Activated CD4-positive, alpha-beta T cell treated with anti-CD3 and anti-CD28 coated beads for 36 hours (primary cell): ENCODE measurements at regions of chr19 and their contacts with region 1.

Region 1: GRCh38 chr19:23273590-23274413 is 23.6 kb upstream of the ZNF724 start:
- DNase-seq: peak; percentile 96
- ATAC-seq: peak; percentile 99
- H3K4me3 Mint-ChIP-seq: peak overlapping the region; percentile 92
- H3K27ac Mint-ChIP-seq: peak overlapping the region; percentile 93
- H3K4me1 Mint-ChIP-seq: peaks cover 25% of the 10 kb centered on the region
- H3K27me3 Mint-ChIP-seq: no peaks in the 10 kb centered on the region

Region 2: GRCh38 chr19:23116802-23117571 is 156.8 kb before region 1 on chr19 and contains the start of gene ZNF730:
- CTCF ChIA-PET with region 1: no interaction called
- POLR2A ChIA-PET with region 1: no interaction called
- intact Hi-C with region 1: loop called in 1 of 2 experiments (anchors 10 kb)
- DNase-seq: peak; percentile 90
- ATAC-seq: peak; percentile 100
- H3K4me3 Mint-ChIP-seq: peak within 1 kb of the TSS; percentile 82
- H3K27ac Mint-ChIP-seq: peak within 1 kb of the TSS; percentile 10
- H3K4me1 Mint-ChIP-seq: peaks cover 6% of the 10 kb centered on the region
- H3K27me3 Mint-ChIP-seq: peaks cover 15% of the 10 kb centered on the region
- total RNA-seq, gene ZNF730: 2.1 to 3.8 TPM

Region 3: DNA sequence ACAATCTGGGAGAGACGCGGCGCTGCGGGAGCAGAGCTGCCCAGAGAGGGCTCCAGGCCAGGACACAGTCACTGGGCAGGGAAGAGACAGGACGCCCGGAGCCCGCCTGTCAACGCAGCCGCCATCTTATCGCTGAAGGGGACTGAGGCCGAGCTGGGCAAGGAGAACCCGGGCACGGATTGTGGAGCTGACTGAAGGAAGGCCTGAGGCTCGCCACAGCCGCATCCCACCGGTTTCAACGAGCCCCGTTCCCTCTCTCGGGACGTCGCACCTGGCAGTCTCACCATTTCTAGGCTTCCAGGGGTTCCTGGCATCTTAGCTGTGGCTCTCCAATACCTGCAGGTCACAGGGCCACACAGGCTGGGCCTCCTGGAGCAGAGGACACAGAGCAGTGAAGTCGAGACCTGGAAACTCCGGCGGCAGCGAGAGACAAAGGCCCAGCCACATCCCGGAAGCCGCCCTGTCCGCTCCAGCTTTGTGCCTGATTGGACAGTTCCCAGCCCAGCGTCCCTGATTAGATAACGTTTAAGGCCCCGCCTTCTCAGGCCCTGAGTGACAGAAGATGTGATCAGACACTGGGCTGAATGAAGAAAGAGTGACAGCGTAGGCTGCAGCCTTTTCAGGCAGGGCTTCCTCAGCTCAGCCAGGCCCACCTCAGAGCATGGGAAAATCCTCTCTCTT is 121.4 kb after region 1 on chr19 and contains the start of gene ZNF91:
- CTCF ChIA-PET with region 1: interaction called, 3 read pairs
- POLR2A ChIA-PET with region 1: interaction called, 4 read pairs
- intact Hi-C with region 1: loop called (anchors 1 to 10 kb)
- DNase-seq: peak; percentile 96
- ATAC-seq: peak; percentile 96
- H3K4me3 Mint-ChIP-seq: peak within 1 kb of the TSS; percentile 98
- H3K27ac Mint-ChIP-seq: peak within 1 kb of the TSS; percentile 99
- H3K4me1 Mint-ChIP-seq: peaks cover 31% of the 10 kb centered on the region
- H3K27me3 Mint-ChIP-seq: no peaks in the 10 kb centered on the region
- total RNA-seq, gene ZNF91: 35.7 to 45.5 TPM

Region 4: DNA sequence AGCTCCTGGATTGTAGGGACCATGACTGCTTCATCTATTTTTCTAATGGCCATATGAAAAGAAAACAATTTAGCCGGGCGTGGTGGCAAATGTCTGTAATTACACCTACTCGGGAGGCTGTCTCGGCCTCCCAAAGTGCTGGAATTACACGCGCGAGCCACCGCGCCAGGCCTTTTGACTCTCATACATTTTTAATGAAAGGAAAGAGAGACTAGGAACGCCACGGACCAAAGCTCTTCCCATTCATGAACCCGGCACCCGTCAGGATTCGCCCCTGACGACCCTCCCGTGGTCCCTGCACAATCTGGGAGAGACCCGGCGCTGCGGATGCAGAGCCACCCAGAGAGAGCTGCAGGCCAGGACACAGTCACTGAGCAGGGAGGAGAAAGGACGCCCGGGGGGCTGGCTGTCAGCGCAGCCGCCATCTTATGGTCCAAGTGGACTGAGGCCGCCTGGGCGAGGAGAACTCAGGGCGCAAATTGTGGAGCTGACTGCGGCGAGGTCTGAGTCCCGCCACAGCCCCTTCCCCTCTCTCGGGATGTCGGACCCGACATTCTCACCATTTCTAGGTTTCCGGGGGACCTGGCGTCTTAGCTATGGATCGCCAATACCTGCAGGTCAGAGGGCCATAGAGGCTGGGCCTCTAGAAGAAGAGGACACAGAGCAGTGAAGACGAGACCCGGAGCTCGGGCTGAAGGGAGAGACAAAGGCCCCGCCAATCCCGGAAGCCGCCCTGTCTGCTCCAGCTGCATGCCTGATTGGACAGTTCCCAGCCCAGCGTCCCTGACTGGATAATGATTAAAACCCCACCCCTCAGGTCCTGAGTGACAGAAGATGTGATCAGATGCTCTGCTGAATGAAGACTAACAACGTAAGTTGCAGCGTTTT is 484.6 kb after region 1 on chr19 and contains the start of gene ZNF681:
- CTCF ChIA-PET with region 1: no interaction called
- POLR2A ChIA-PET with region 1: interaction called, 4 read pairs
- intact Hi-C with region 1: loop called in 1 of 2 experiments (anchors 5 kb)
- DNase-seq: peak; percentile 94
- ATAC-seq: peak; percentile 93
- H3K4me3 Mint-ChIP-seq: peak within 1 kb of the TSS; percentile 95
- H3K27ac Mint-ChIP-seq: peak within 1 kb of the TSS; percentile 95
- H3K4me1 Mint-ChIP-seq: peaks cover 25% of the 10 kb centered on the region
- H3K27me3 Mint-ChIP-seq: no peaks in the 10 kb centered on the region
- total RNA-seq, gene ZNF681: 5.7 to 9.1 TPM